K562 (cell line): ENCODE measurements at regions of chr11 and their contacts with region 1.

Region 1: GRCh38 chr11:104772806-104773241 is 125.4 kb downstream of the CASP12 start:
- DNase-seq: no peak
- ATAC-seq: no peak
- H3K4me3 ChIP-seq: no peak overlapping the region
- H3K27ac ChIP-seq: no peak overlapping the region
- H3K4me1 ChIP-seq: no peaks in the 10 kb centered on the region
- H3K27me3 ChIP-seq: no peaks in the 10 kb centered on the region
- CTCF ChIP-seq: no peak
- EP300 ChIP-seq: no peak
- POLR2A ChIP-seq: no peak
- RAD21 ChIP-seq: no peak

Region 2: GRCh38 chr11:103997082-103997481 is 775.7 kb before region 1 on chr11:
- CTCF ChIA-PET with region 1: no interaction called
- POLR2A ChIA-PET with region 1: no interaction called
- in situ Hi-C with region 1: no loop called
- intact Hi-C with region 1: loop called (anchors 5 kb)
- DNase-seq: no peak
- ATAC-seq: no peak
- H3K4me3 ChIP-seq: no peak overlapping the region
- H3K27ac ChIP-seq: no peak overlapping the region
- H3K4me1 ChIP-seq: no peaks in the 10 kb centered on the region
- H3K27me3 ChIP-seq: no peaks in the 10 kb centered on the region
- CTCF ChIP-seq: no peak
- EP300 ChIP-seq: no peak
- POLR2A ChIP-seq: no peak
- RAD21 ChIP-seq: no peak

Region 3: GRCh38 chr11:104713401-104713800 is 59.4 kb before region 1 on chr11:
- CTCF ChIA-PET with region 1: no interaction called
- POLR2A ChIA-PET with region 1: no interaction called
- in situ Hi-C with region 1: no loop called
- intact Hi-C with region 1: loop called (anchors 10 kb)
- DNase-seq: no peak
- ATAC-seq: no peak
- H3K4me3 ChIP-seq: no peak overlapping the region
- H3K27ac ChIP-seq: no peak overlapping the region
- H3K4me1 ChIP-seq: no peaks in the 10 kb centered on the region
- H3K27me3 ChIP-seq: no peaks in the 10 kb centered on the region
- CTCF ChIP-seq: no peak
- EP300 ChIP-seq: no peak
- POLR2A ChIP-seq: no peak
- RAD21 ChIP-seq: no peak